B cell (primary cell): ENCODE measurements at regions of chr12 and their contacts with region 1.

Region 1: GRCh38 chr12:47837190-47838171 is 17.8 kb upstream of the HDAC7 start:
- DNase-seq: peak; percentile 84
- ATAC-seq: peak; percentile 50
- H3K4me3 ChIP-seq: no peak overlapping the region
- H3K4me3 Mint-ChIP-seq: peak overlapping the region; percentile 49
- H3K27ac ChIP-seq: no peak overlapping the region
- H3K27ac Mint-ChIP-seq: peak overlapping the region; percentile 77
- H3K4me1 ChIP-seq: peaks cover 46 to 53% of the 10 kb centered on the region in 2 donors
- H3K4me1 Mint-ChIP-seq: peaks cover 53% of the 10 kb centered on the region
- H3K27me3 ChIP-seq: no peaks in the 10 kb centered on the region
- H3K27me3 Mint-ChIP-seq: no peaks in the 10 kb centered on the region
- CTCF ChIP-seq: peak; percentile 95

Region 2: DNA sequence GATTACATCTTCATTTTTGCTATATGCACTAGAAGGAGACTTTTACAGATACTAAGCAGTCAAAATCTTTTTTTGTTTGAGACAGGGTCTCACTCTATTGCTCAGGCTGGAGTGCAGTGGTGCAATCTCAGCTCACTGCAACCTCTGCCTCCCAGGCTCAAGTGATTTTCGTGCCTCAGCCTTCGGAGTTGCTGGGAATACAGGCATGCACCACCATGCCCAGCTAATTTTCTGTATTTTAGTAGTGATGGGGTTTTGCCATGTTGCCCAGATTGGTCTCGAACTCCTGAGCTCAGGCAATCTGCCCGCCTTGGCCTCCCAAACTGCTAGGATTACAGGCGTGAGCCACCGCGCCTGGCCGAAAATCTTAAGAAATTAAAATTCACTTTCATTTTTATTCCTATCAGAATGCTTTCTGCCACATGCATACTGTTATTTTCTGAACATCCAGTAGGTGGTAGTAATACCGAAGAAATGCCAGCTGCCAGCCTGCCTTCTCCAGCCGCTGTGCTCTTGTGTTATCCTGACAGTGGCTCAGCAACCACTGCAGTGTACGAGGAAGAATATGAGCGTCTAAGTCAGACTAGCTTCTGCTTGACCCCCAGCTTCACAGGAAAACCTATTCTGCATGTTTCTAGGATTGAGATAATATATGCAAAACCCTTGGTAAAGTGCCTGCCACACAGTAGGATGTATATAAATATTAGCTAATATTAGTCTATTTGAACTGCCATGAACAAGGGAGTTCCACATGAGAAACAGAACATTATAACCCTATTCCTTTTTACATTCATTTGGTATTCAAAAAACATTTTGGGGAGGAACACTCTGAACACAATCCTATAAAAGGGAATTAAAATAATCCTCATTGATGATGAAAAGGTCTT is 185.9 kb before region 1 on chr12:
- CTCF ChIA-PET with region 1: interaction called, 22 read pairs
- POLR2A ChIA-PET with region 1: no interaction called
- intact Hi-C with region 1: loop called (anchors 2 kb)
- DNase-seq: peak; percentile 66
- ATAC-seq: peak; percentile 83
- H3K4me3 ChIP-seq: no peak overlapping the region
- H3K4me3 Mint-ChIP-seq: no peak overlapping the region
- H3K27ac ChIP-seq: no peak overlapping the region
- H3K27ac Mint-ChIP-seq: no peak overlapping the region
- H3K4me1 ChIP-seq: peaks cover 0 to 12% of the 10 kb centered on the region in 2 donors
- H3K4me1 Mint-ChIP-seq: peaks cover 13% of the 10 kb centered on the region
- H3K27me3 ChIP-seq: no peaks in the 10 kb centered on the region
- H3K27me3 Mint-ChIP-seq: no peaks in the 10 kb centered on the region
- CTCF ChIP-seq: peak; percentile 82

Region 3: GRCh38 chr12:47715393-47715876 is 122.0 kb before region 1 on chr12:
- CTCF ChIA-PET with region 1: interaction called, 300 read pairs
- POLR2A ChIA-PET with region 1: no interaction called
- intact Hi-C with region 1: loop called (anchors 1 kb)
- DNase-seq: peak; percentile 87
- ATAC-seq: peak; percentile 86
- H3K4me3 ChIP-seq: no peak overlapping the region
- H3K4me3 Mint-ChIP-seq: no peak overlapping the region
- H3K27ac ChIP-seq: no peak overlapping the region
- H3K27ac Mint-ChIP-seq: peak overlapping the region; percentile 33
- H3K4me1 ChIP-seq: peaks cover 15 to 28% of the 10 kb centered on the region in 2 donors
- H3K4me1 Mint-ChIP-seq: peaks cover 37% of the 10 kb centered on the region
- H3K27me3 ChIP-seq: no peaks in the 10 kb centered on the region
- H3K27me3 Mint-ChIP-seq: no peaks in the 10 kb centered on the region
- CTCF ChIP-seq: peak; percentile 86

Region 4: GRCh38 chr12:47758834-47759690 is 78.4 kb before region 1 on chr12 and contains the start of gene RAPGEF3:
- CTCF ChIA-PET with region 1: interaction called, 30 read pairs
- POLR2A ChIA-PET with region 1: interaction called, 3 read pairs
- intact Hi-C with region 1: no loop called
- DNase-seq: peak; percentile 78
- ATAC-seq: peak; percentile 77
- H3K4me3 ChIP-seq: peak within 1 kb of the TSS; percentile 15 to 71 (median 67)
- H3K4me3 Mint-ChIP-seq: peak within 1 kb of the TSS; percentile 85
- H3K27ac ChIP-seq: peak within 1 kb of the TSS in 1 of 2 donors; percentile 23
- H3K27ac Mint-ChIP-seq: peak within 1 kb of the TSS; percentile 50
- H3K4me1 ChIP-seq: peaks cover 52 to 66% of the 10 kb centered on the region in 2 donors
- H3K4me1 Mint-ChIP-seq: peaks cover 53% of the 10 kb centered on the region
- H3K27me3 ChIP-seq: no peaks in the 10 kb centered on the region
- H3K27me3 Mint-ChIP-seq: no peaks in the 10 kb centered on the region
- CTCF ChIP-seq: peak; percentile 70
- total RNA-seq, gene RAPGEF3: 5.2 and 5.4 TPM in 2 replicates

Region 5: GRCh38 chr12:47779301-47779942 is 58.1 kb before region 1 on chr12:
- CTCF ChIA-PET with region 1: interaction called, 464 read pairs
- POLR2A ChIA-PET with region 1: interaction called, 6 read pairs
- intact Hi-C with region 1: loop called (anchors 1 kb)
- DNase-seq: peak; percentile 90
- ATAC-seq: peak; percentile 90
- H3K4me3 ChIP-seq: no peak overlapping the region
- H3K4me3 Mint-ChIP-seq: no peak overlapping the region
- H3K27ac ChIP-seq: no peak overlapping the region
- H3K27ac Mint-ChIP-seq: peak overlapping the region; percentile 80
- H3K4me1 ChIP-seq: peaks cover 0 to 14% of the 10 kb centered on the region in 2 donors
- H3K4me1 Mint-ChIP-seq: peaks cover 23% of the 10 kb centered on the region
- H3K27me3 ChIP-seq: no peaks in the 10 kb centered on the region
- H3K27me3 Mint-ChIP-seq: no peaks in the 10 kb centered on the region
- CTCF ChIP-seq: peak; percentile 92

Region 6: DNA sequence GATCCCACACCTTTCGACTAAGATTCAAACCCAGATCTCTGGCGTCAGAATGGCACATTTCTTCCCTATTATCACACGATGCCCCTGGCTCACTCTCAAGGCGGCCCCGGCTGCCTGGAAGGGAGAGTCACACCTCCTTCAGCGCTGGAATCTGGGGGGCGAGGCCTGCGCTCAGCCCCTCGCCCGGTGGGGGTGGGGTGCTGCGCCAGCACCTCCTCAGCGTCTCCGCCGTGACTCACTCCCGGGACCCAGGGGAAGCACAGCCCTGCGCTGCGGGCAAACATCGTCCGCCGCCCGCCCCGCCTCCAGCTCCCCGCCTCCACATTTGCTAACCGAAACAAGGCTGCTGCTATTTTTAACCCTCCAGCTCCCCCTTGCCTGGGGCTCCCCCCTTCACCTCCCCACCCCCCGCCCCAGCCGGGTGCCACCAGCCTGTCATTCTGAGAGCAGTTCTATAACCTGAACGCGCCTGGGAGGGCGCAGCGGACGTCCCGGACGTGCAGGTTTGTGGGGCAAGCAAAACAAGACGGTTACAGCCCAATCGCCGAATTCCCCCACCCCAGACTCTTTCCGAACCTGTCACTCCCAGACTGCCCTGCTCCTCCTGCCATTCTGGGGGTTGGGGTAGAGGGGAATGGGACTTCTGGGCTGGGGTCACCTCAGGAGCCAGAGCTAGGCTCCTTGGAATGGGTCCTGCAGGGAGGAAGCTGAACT is 24.5 kb before region 1 on chr12:
- CTCF ChIA-PET with region 1: interaction called, 1,203 read pairs
- POLR2A ChIA-PET with region 1: interaction called, 264 read pairs
- intact Hi-C with region 1: loop called (anchors 1 kb)
- DNase-seq: peak; percentile 94
- ATAC-seq: peak; percentile 72
- H3K4me3 ChIP-seq: peak overlapping the region; percentile 53 to 68 (median 61)
- H3K4me3 Mint-ChIP-seq: peak overlapping the region; percentile 85
- H3K27ac ChIP-seq: peak overlapping the region; percentile 96 to 98
- H3K27ac Mint-ChIP-seq: peak overlapping the region; percentile 96
- H3K4me1 ChIP-seq: peaks cover 91 to 97% of the 10 kb centered on the region in 2 donors
- H3K4me1 Mint-ChIP-seq: peaks cover 94% of the 10 kb centered on the region
- H3K27me3 ChIP-seq: no peaks in the 10 kb centered on the region
- H3K27me3 Mint-ChIP-seq: no peaks in the 10 kb centered on the region
- CTCF ChIP-seq: no peak

Region 7: DNA sequence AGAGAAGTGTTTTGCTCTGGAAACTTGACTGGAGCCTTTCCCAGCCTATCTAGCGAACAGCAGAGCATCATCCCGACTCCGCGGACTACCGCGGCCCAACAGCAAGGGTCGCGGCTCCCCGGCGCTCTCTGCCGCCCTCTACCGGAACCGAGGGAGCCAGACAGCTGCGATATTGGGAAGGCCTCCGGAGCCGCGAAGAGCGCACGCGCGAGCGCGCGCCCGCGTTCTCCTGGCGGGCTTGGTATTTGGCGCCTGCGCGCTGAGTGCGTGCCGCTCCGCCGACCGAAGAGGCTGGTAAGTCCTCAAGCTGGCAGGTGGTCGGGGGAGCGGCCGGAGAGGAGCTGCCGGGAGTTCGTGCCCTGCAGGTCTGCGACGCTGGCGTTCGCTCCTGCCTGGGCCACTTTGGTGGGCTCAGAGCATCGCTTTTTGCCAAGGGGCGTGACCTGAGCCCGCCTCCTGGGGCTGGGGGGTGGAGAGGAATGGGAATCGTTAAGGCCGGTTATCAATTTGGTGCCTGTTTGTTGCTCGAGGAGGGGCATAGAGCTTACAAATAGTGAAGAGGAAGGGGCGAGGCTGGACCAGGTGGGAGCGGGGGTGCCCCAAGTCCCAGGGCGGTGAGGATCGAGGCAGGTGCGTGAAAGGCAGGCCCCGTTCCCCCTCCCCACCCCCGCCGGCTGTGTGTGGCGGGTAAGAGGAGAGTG is 126.0 kb after region 1 on chr12 and contains the start of gene TMEM106C:
- CTCF ChIA-PET with region 1: interaction called, 10 read pairs
- POLR2A ChIA-PET with region 1: no interaction called
- intact Hi-C with region 1: loop called (anchors 2 kb)
- DNase-seq: peak; percentile 97
- ATAC-seq: peak; percentile 99
- H3K4me3 ChIP-seq: peak within 1 kb of the TSS; percentile 68 to 96 (median 75)
- H3K4me3 Mint-ChIP-seq: peak within 1 kb of the TSS; percentile 96
- H3K27ac ChIP-seq: peak within 1 kb of the TSS; percentile 17 to 67
- H3K27ac Mint-ChIP-seq: peak within 1 kb of the TSS; percentile 86
- H3K4me1 ChIP-seq: peaks cover 6 to 14% of the 10 kb centered on the region in 2 donors
- H3K4me1 Mint-ChIP-seq: peaks cover 25% of the 10 kb centered on the region
- H3K27me3 ChIP-seq: no peaks in the 10 kb centered on the region
- H3K27me3 Mint-ChIP-seq: peaks cover 16% of the 10 kb centered on the region
- CTCF ChIP-seq: peak; percentile 94
- total RNA-seq, gene TMEM106C: 32.9 and 37.5 TPM in 2 replicates

Region 8: GRCh38 chr12:48084066-48084465 is 246.6 kb after region 1 on chr12:
- CTCF ChIA-PET with region 1: no interaction called
- POLR2A ChIA-PET with region 1: no interaction called
- intact Hi-C with region 1: no loop called
- DNase-seq: peak; percentile 26
- ATAC-seq: no peak
- H3K4me3 ChIP-seq: no peak overlapping the region
- H3K4me3 Mint-ChIP-seq: no peak overlapping the region
- H3K27ac ChIP-seq: no peak overlapping the region
- H3K27ac Mint-ChIP-seq: no peak overlapping the region
- H3K4me1 ChIP-seq: peaks cover 0 to 9% of the 10 kb centered on the region in 2 donors
- H3K4me1 Mint-ChIP-seq: peaks cover 5% of the 10 kb centered on the region
- H3K27me3 ChIP-seq: no peaks in the 10 kb centered on the region
- H3K27me3 Mint-ChIP-seq: no peaks in the 10 kb centered on the region
- CTCF ChIP-seq: peak; percentile 35

Region 9: DNA sequence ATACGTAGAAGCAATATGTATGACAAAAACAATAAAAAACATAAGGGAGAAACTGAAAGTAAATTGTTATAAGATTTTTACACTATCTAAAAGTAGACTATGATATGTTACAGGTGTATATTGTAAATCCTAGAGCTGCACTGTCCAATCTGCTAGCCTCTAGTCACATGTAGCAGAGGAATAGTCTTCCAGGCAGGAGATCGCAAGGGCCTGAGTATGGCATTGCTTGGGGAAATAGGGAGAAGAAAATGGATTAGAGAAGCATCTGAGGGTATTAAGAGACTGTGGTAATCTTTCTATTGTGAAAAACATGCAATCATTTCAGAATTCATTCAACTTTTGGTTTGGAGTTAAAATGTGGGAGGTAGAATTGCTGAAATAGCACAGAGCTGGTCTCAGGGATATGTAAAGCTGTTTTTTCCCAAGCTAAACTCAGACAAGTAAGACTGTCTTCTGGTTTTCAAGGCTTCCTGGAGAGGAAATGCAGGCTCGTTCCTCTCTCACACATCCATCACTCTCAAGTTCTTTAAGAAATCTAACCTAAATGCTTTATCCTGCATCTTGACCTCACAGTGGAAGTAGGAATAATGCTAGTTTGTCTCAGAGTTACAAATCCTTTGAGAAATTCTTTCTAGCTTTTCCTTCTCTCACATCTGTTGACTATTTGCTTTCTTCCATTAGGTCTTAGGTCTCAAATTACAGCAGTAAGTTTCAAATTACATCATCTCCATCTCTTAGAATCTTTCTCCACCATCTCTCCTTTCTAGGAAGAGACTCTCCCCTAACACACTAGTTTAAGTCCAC is 338.3 kb after region 1 on chr12:
- CTCF ChIA-PET with region 1: no interaction called
- POLR2A ChIA-PET with region 1: no interaction called
- intact Hi-C with region 1: no loop called
- DNase-seq: no peak
- ATAC-seq: no peak
- H3K4me3 ChIP-seq: no peak overlapping the region
- H3K4me3 Mint-ChIP-seq: no peak overlapping the region
- H3K27ac ChIP-seq: no peak overlapping the region
- H3K27ac Mint-ChIP-seq: no peak overlapping the region
- H3K4me1 ChIP-seq: no peaks in the 10 kb centered on the region
- H3K4me1 Mint-ChIP-seq: no peaks in the 10 kb centered on the region
- H3K27me3 ChIP-seq: peaks cover 0 to 17% (median 12%) of the 10 kb centered on the region in 4 experiments
- H3K27me3 Mint-ChIP-seq: peaks cover 51% of the 10 kb centered on the region
- CTCF ChIP-seq: no peak